ENCODE measurements at regions of chr6 and their contacts with region 1.

Region 1: GRCh38 chr6:20534295-20535262 is at the start of gene CDKAL1:
- DNase-seq: peak; percentile 88 to 94 (median 90)
- ATAC-seq: peak; percentile 99
- H3K4me3 ChIP-seq: peak within 1 kb of the TSS; percentile 78
- H3K4me1 ChIP-seq: peaks cover 6% of the 10 kb centered on the region
- CTCF ChIP-seq: no peak
- total RNA-seq, gene CDKAL1: 13.4 to 15.5 (median 15.3) TPM

Region 2: DNA sequence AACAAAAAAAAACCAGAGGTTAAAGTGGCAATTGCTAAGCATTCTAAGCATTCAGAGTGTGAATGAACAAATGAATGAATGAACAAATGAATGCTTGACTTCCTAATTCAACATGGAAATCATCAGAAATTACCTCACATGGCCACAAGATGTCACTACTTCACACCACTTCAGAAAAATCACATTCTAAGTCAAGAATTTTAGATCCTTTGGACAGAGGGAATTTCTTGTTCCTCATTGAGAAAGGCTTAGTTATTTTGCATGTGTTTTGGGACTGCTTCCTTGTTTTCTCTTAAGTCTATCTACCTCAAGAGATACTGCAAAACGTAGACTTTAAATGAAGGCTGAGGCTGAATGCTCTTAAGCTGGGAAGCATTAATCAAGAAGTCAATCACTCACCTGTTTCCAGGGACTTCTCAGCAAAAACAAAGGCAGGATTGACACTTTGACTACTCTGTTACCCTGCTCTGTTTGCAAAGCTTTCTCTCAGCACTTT is 442.5 kb before region 1 on chr6:
- intact Hi-C with region 1: loop called in 1 of 2 experiments (anchors 10 kb)
- DNase-seq: peak in 1 of 3 donors; percentile 36
- ATAC-seq: peak; percentile 60
- H3K4me3 ChIP-seq: no peak overlapping the region
- H3K4me1 ChIP-seq: no peaks in the 10 kb centered on the region
- CTCF ChIP-seq: peak; percentile 44

Region 3: DNA sequence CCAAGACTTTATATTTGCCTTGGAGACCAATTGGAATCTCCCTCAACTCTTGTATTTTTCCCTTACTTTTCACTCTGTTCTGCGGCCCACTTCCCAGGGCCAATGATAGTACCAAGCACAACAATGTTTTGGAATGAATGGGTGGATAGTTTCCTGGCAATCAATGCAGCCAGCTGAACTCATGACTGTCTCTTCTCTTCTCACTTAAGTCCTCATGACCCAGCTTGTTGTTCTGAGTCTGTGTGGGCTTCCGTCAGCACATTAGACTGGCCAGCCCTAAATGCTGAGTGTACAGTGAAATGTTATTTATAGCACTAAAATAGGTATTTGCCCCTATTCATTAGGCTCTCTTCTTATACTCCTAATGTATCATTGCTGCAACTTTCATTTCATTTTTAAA is 316.7 kb before region 1 on chr6:
- intact Hi-C with region 1: no loop called
- DNase-seq: no peak
- ATAC-seq: peak; percentile 20
- H3K4me3 ChIP-seq: no peak overlapping the region
- H3K4me1 ChIP-seq: peaks cover 22% of the 10 kb centered on the region
- CTCF ChIP-seq: no peak

Region 4: GRCh38 chr6:20291764-20292580 is 242.6 kb before region 1 on chr6:
- intact Hi-C with region 1: loop called (anchors 2 to 5 kb)
- DNase-seq: peak in 2 of 3 donors; percentile 63 to 93
- ATAC-seq: peak; percentile 99
- H3K4me3 ChIP-seq: no peak overlapping the region
- H3K4me1 ChIP-seq: no peaks in the 10 kb centered on the region
- CTCF ChIP-seq: peak; percentile 77

Region 5: GRCh38 chr6:20404641-20405032 is 129.9 kb before region 1 on chr6:
- intact Hi-C with region 1: loop called in 1 of 2 experiments (anchors 5 kb)
- DNase-seq: peak in 2 of 3 donors; percentile 46 to 62
- ATAC-seq: no peak
- H3K4me3 ChIP-seq: no peak overlapping the region
- H3K4me1 ChIP-seq: peaks cover 13% of the 10 kb centered on the region
- CTCF ChIP-seq: no peak